A549 (cell line): ENCODE measurements at regions of chr6 and their contacts with region 1.

Region 1: GRCh38 chr6:117555882-117556498 is 46.3 kb downstream of the GOPC start:
- DNase-seq: no peak
- ATAC-seq: peak in 1 of 2 experiments; percentile 37; a peak in 2 of 6 replicates
- H3K4me3 ChIP-seq: no peak overlapping the region
- H3K27ac ChIP-seq: peak overlapping the region; percentile 74 to 88
- H3K4me1 ChIP-seq: peaks cover 29% of the 10 kb centered on the region
- CTCF ChIP-seq: peak; percentile 84
- EP300 ChIP-seq: no peak
- POLR2A ChIP-seq: no peak
- RAD21 ChIP-seq: peak; percentile 77 to 83

Region 2: DNA sequence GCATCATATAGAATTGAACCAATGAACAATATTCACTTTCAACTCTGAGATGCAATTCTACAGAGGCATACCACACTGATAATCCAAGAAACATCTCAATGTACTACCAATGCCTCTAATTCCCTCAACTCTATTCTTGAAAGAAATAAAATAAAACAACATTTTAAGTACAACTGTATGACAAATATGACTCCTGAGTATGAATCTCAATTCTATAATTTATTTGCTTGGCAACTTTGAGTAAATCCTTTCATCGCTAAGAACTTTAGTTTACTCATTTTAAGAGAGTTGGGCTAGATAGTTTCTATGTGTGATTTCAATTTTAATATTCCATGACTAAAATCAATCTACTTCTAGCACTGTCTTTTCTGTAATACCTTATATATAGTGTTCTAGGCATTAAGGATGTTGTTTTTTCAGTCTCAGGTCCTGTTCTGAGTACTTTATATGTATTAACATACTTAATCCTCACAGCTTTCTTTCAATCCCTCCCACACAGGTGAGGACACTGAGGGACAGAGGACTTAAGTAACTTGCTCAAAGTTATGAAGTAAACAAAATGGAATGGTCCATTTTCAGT is 12.9 kb after region 1 on chr6:
- CTCF ChIA-PET with region 1: interaction called, 13 read pairs
- POLR2A ChIA-PET with region 1: no interaction called
- DNase-seq: no peak
- ATAC-seq: no peak
- H3K4me3 ChIP-seq: no peak overlapping the region
- H3K27ac ChIP-seq: no peak overlapping the region
- H3K4me1 ChIP-seq: no peaks in the 10 kb centered on the region
- CTCF ChIP-seq: no peak
- EP300 ChIP-seq: no peak
- POLR2A ChIP-seq: no peak
- RAD21 ChIP-seq: no peak